A673 (cell line): ENCODE measurements at regions of chrX and their contacts with region 1.

Region 1: DNA sequence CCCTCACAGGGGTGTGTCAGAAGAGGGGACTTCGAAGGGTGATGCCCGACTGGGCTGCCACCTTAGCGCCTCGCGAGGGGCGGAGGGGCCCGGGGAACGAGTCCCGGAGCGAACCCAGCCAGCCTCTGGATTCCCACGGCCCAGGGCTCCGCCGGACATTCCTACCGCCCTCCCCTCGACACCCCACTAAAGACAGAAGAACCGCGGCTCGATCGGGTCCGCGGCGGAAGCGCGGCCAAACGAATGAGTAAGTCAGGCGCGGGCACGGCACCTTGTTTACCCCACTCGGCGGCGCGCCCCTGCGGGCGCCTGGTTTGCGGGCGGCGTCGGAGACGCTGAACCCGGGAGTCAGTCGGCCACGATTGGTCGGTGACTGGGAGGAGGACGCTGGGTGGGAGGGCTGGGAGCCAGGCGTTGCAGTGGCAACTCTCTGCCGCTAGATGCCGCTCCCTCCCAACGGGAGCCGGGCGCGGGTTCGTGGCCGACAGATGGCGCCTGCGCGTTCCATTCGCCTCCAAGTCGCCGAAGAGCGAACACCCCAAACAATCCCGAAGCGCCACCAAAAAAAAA is 1.4 kb upstream of the STAG2 start:
- DNase-seq: peak; percentile 92
- H3K4me3 ChIP-seq: peak overlapping the region; percentile 72
- H3K27ac ChIP-seq: peak overlapping the region; percentile 99
- H3K4me1 ChIP-seq: peaks cover 5% of the 10 kb centered on the region
- H3K27me3 ChIP-seq: no peaks in the 10 kb centered on the region
- CTCF ChIP-seq: peak; percentile 79

Region 2: DNA sequence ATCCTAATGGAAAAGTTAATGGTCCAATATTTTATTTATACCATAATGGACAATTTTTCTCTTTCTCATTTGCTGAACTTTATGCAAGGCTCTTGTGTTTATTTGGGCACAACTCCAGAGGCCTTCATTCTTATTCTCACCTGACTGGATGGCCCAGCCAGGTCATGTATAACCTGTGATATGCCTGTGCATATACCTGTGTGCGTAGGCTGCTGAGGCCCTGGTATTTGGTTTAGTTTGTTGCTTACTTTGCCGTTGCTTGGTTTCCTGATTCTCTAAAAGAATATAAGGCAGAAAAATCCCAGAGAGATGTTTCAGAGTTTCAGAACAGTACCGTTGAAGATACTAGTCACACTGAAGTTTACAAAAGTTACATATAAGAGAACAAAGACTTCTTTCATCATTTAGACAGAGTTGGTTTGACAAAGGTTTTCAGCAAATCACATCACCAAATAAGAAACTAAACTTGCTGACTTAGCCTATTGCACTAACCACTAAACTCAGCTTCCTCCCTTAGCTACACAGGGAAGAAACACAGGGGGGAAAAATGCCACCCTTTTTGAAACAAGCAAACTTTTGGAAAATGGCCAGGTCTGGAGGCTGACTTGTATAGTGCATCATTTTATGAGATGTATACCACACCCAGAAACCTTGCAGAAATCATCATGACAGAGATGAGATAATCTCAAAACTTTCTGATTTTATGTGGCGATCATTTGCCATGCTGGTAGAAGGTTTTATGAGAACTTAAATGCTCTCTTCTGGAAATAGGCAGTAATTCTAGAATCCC is 527.6 kb before region 1 on chrX:
- CTCF ChIA-PET with region 1: no interaction called
- POLR2A ChIA-PET with region 1: no interaction called
- intact Hi-C with region 1: no loop called
- DNase-seq: no peak
- H3K4me3 ChIP-seq: no peak overlapping the region
- H3K27ac ChIP-seq: no peak overlapping the region
- H3K4me1 ChIP-seq: no peaks in the 10 kb centered on the region
- H3K27me3 ChIP-seq: no peaks in the 10 kb centered on the region
- CTCF ChIP-seq: no peak

Region 3: GRCh38 chrX:124018023-124018422 is 57.9 kb after region 1 on chrX:
- CTCF ChIA-PET with region 1: interaction called, 3 read pairs
- POLR2A ChIA-PET with region 1: no interaction called
- intact Hi-C with region 1: loop called (anchors 5 kb)
- DNase-seq: peak; percentile 9
- H3K4me3 ChIP-seq: no peak overlapping the region
- H3K27ac ChIP-seq: no peak overlapping the region
- H3K4me1 ChIP-seq: peaks cover 5% of the 10 kb centered on the region
- H3K27me3 ChIP-seq: no peaks in the 10 kb centered on the region
- CTCF ChIP-seq: peak; percentile 33

Region 4: GRCh38 chrX:124098089-124098488 is 138.0 kb after region 1 on chrX:
- CTCF ChIA-PET with region 1: no interaction called
- POLR2A ChIA-PET with region 1: interaction called, 3 read pairs
- intact Hi-C with region 1: loop called (anchors 10 kb)
- DNase-seq: peak; percentile 55
- H3K4me3 ChIP-seq: no peak overlapping the region
- H3K27ac ChIP-seq: no peak overlapping the region
- H3K4me1 ChIP-seq: peaks cover 3% of the 10 kb centered on the region
- H3K27me3 ChIP-seq: no peaks in the 10 kb centered on the region
- CTCF ChIP-seq: peak; percentile 72

Region 5: DNA sequence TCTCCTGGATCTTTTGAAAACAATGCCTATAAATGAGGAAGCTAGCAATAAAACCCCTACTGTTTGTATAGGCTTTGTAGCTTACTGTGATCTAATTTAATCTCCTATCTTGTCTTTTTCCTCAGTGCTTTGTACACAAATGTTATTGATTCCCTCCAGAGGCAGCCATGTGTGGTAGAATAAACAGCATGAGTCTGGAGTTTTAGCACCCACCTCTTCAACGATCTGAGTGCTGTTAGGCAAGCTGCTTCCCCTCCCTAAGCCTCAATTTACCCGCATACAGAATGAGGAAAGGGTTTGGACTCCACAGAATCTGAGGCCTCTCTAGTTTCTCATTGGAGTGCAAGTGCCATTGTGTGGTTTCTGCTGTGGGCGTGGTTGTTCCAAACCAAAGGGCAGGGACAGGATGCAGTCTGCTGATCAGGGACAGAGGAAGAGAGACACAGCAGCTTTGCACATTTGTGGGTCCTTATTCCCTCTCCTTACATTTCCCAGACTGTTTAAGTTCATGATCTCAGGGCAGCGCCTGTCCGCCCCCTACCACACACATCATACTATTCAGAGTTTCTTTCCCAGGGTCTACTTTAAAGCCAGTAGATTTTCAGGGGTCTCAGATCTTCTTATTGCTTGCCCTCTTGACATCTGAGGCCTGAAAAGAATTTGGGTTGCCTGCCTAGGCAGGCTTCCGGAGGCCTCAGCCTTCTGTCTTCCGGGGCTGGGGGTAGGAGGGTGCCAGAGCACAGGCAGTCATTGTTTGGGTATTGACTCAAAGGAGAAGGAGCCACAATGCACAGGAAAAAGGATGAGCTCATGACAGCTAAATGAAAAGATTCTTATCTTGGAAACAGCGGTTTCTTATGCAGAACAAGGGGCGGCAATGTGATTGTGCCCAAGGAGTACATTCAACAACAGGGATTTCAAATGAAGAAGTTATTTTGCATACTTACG is 257.5 kb after region 1 on chrX:
- CTCF ChIA-PET with region 1: no interaction called
- POLR2A ChIA-PET with region 1: no interaction called
- intact Hi-C with region 1: loop called (anchors 5 kb)
- DNase-seq: peak; percentile 88
- H3K4me3 ChIP-seq: no peak overlapping the region
- H3K27ac ChIP-seq: peak overlapping the region; percentile 73
- H3K4me1 ChIP-seq: peaks cover 41% of the 10 kb centered on the region
- H3K27me3 ChIP-seq: no peaks in the 10 kb centered on the region
- CTCF ChIP-seq: no peak

Region 6: GRCh38 chrX:124280294-124280902 is 320.3 kb after region 1 on chrX:
- CTCF ChIA-PET with region 1: no interaction called
- POLR2A ChIA-PET with region 1: no interaction called
- intact Hi-C with region 1: no loop called
- DNase-seq: no peak
- H3K4me3 ChIP-seq: no peak overlapping the region
- H3K27ac ChIP-seq: no peak overlapping the region
- H3K4me1 ChIP-seq: no peaks in the 10 kb centered on the region
- H3K27me3 ChIP-seq: no peaks in the 10 kb centered on the region
- CTCF ChIP-seq: no peak

Region 7: DNA sequence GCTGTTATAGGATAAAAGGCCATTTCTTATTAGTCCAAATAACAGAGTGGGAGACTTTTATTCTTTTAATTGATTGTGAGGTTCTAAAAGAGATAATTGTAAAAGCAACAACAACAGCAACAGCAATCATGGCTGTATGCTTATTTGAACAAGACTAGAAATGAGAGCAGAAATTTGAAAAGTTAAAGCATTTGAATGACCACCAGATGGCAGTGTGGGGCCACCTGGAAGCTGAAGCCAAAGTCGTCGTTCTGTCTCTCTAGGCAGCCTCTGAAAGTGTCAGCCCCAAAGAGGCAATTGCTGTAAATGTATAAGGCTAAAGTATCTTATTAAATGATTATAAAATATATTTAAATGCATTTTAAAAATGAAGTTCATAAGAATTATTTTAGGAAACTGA is 428.4 kb after region 1 on chrX:
- CTCF ChIA-PET with region 1: no interaction called
- POLR2A ChIA-PET with region 1: no interaction called
- intact Hi-C with region 1: loop called (anchors 10 kb)
- DNase-seq: peak; percentile 71
- H3K4me3 ChIP-seq: no peak overlapping the region
- H3K27ac ChIP-seq: no peak overlapping the region
- H3K4me1 ChIP-seq: no peaks in the 10 kb centered on the region
- H3K27me3 ChIP-seq: no peaks in the 10 kb centered on the region
- CTCF ChIP-seq: peak; percentile 73